ENCODE measurements at regions of chr19 and their contacts with region 1.

Region 1: DNA sequence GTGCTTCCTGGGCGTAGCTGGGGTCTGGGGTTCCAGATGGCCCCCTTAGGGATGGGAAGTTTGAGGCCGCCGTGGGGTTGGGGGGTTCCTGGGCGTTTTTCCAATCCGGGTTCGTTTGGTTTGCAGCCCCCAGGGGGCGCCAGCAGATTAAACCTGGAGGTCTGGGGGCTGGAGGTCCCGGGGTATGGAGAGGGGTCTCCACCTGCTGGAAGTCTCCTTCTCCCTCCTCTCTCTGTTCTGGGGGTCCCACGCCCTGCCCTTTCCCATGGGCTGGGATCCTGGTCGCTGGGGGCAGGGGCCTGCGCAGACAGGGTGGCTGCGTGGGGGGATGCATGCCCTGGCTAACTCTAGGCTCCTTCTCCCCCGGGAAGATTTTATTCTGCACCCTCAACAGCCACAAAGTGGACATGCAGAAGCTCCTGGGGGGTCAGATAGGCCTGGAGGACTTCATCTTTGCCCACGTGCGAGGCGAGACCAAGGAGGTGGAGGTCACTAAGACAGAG is 897 bp downstream of the GIPC3 start:
- DNase-seq: peak in 6 of 9 donors; percentile 26 to 59 (median 45)
- ATAC-seq: peak; percentile 51
- H3K4me3 ChIP-seq: peak overlapping the region; percentile 54
- H3K4me3 Mint-ChIP-seq: peak overlapping the region in 8 of 10 donors; percentile 27 to 74 (median 68)
- H3K27ac ChIP-seq: peak overlapping the region; percentile 31
- H3K27ac Mint-ChIP-seq: no peak overlapping the region
- H3K4me1 ChIP-seq: peaks cover 0 to 6% of the 10 kb centered on the region in 2 donors
- H3K4me1 Mint-ChIP-seq: no peaks in the 10 kb centered on the region
- H3K27me3 ChIP-seq: no peaks in the 10 kb centered on the region
- H3K27me3 Mint-ChIP-seq: peaks cover 0 to 6% (median 0%) of the 10 kb centered on the region in 5 donors

Region 2: DNA sequence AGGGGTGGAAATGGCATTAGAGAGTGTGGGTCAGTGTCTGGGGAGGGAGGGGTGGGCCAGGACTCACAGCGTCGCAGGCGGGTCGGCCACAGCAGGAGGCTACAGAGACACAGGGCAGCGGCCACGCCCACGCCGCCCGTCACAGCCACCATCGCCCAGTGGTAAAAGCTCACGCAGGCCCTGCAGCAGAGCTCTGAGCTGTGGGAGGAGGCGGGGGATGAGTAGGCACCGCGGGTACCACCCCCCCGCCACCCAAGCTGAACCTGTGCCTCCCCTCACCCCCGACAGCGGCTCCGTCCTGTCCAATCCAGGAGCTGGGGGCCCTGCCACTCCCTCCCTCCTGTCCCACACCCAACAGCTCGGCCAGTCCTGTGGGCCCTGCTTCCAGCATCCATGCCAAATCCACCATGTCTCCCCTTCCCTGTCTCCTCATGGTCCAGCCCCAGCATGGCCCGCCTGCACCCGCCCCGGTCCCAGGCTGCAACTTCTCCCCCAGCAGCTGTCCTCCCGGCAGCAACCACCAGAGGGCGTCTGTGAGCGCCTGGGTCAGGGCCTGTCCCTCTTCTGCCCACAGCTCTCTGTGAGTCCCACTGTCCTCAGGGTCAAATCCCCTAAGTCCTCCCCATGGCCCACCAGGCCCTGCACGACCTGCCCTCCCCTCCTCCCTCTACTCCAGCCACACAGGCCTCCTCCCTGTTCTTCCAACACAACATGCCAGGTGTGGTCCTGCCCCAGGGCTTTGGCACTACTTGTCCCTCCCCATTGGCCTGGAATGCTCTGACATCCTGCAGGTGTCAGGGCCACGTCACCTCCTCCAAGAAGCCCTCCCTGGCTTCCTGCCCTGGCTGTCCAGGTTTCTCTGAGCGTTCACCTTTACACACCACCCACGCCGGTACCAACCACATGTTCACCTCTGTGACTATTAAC is 41.2 kb before region 1 on chr19:
- CTCF ChIA-PET with region 1: interaction called, 8 read pairs
- POLR2A ChIA-PET with region 1: no interaction called
- intact Hi-C with region 1: loop called in 1 of 2 experiments (anchors 2 kb)
- DNase-seq: peak; percentile 52 to 89 (median 70)
- ATAC-seq: peak; percentile 77
- H3K4me3 ChIP-seq: no peak overlapping the region
- H3K4me3 Mint-ChIP-seq: peak overlapping the region in 1 of 10 donors; percentile 7
- H3K27ac ChIP-seq: peak overlapping the region; percentile 19
- H3K27ac Mint-ChIP-seq: peak overlapping the region in 8 of 9 donors; percentile 46 to 81 (median 71)
- H3K4me1 ChIP-seq: no peaks in the 10 kb centered on the region
- H3K4me1 Mint-ChIP-seq: peaks cover 4 to 17% (median 11%) of the 10 kb centered on the region in 7 donors
- H3K27me3 ChIP-seq: no peaks in the 10 kb centered on the region
- H3K27me3 Mint-ChIP-seq: no peaks in the 10 kb centered on the region

Region 3: DNA sequence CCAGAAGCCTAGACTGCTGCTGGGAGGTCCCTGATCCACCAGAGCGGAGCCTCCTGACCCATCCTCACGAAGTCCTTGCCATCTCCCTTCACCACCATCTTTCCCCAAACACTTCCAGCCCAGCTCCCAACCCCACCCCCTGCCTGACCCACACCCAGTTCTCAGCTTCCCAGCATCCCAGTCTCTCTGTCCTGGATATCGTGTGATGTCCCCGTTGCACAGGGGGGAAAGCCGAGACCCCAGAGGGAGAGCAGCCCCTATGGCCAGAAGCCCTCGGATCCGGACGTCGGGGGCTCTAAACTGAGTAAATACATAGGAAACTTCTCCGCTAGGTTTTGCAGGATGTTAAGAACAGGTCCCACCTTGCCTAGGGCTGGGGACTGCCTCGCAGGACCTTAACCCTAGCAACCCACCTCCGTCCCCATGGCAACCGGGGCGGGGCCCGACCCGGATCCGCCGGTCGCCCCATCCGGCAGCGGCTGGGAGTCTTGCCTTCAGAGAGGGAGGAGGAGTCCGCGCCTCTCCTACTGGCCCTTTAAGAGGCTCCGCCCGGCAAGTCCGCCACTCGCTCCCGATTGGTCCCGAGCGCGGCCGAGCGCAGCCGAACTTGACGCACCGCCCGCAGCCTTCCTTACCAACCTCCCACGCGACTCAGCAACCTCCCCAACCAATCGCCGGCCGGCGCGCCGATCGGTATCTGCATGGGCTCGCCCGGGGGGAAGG is 13.9 kb before region 1 on chr19:
- CTCF ChIA-PET with region 1: interaction called, 3 read pairs
- POLR2A ChIA-PET with region 1: interaction called, 9 read pairs
- intact Hi-C with region 1: loop called in 1 of 2 experiments (anchors 1 kb)
- DNase-seq: peak; percentile 94 to 99 (median 98)
- ATAC-seq: peak; percentile 96
- H3K4me3 ChIP-seq: peak overlapping the region; percentile 75
- H3K4me3 Mint-ChIP-seq: peak overlapping the region; percentile 72 to 91 (median 82)
- H3K27ac ChIP-seq: peak overlapping the region; percentile 62
- H3K27ac Mint-ChIP-seq: peak overlapping the region in 8 of 9 donors; percentile 30 to 84 (median 61)
- H3K4me1 ChIP-seq: peaks cover 12 to 13% of the 10 kb centered on the region in 2 donors
- H3K4me1 Mint-ChIP-seq: peaks cover 11 to 29% (median 14%) of the 10 kb centered on the region in 7 donors
- H3K27me3 ChIP-seq: no peaks in the 10 kb centered on the region
- H3K27me3 Mint-ChIP-seq: no peaks in the 10 kb centered on the region

Region 4: GRCh38 chr19:3606690-3607289 is 20.6 kb after region 1 on chr19 and contains the start of gene TBXA2R:
- CTCF ChIA-PET with region 1: interaction called, 5 read pairs
- POLR2A ChIA-PET with region 1: interaction called, 4 read pairs
- intact Hi-C with region 1: loop called in 1 of 2 experiments (anchors 2 kb)
- DNase-seq: peak in 6 of 9 donors; percentile 33 to 68 (median 46)
- ATAC-seq: peak; percentile 58
- H3K4me3 ChIP-seq: peak within 1 kb of the TSS; percentile 44
- H3K4me3 Mint-ChIP-seq: peak within 1 kb of the TSS in 8 of 10 donors; percentile 45 to 69 (median 58)
- H3K27ac ChIP-seq: peak within 1 kb of the TSS; percentile 65
- H3K27ac Mint-ChIP-seq: peak within 1 kb of the TSS in 5 of 9 donors; percentile 41 to 70 (median 53)
- H3K4me1 ChIP-seq: peaks cover 19 to 22% of the 10 kb centered on the region in 2 donors
- H3K4me1 Mint-ChIP-seq: peaks cover 7 to 15% (median 11%) of the 10 kb centered on the region in 7 donors
- H3K27me3 ChIP-seq: no peaks in the 10 kb centered on the region
- H3K27me3 Mint-ChIP-seq: peaks cover 0 to 9% (median 0%) of the 10 kb centered on the region in 5 donors
- total RNA-seq, gene TBXA2R: 0.73 to 5.9 (median 4.1) TPM

Region 5: GRCh38 chr19:3618144-3618810 is 32.1 kb after region 1 on chr19:
- CTCF ChIA-PET with region 1: interaction called, 4 read pairs
- POLR2A ChIA-PET with region 1: interaction called, 4 read pairs
- intact Hi-C with region 1: loop called in 1 of 2 experiments (anchors 1 kb)
- DNase-seq: peak in 7 of 9 donors; percentile 38 to 71 (median 45)
- ATAC-seq: peak; percentile 82
- H3K4me3 ChIP-seq: no peak overlapping the region
- H3K4me3 Mint-ChIP-seq: peak overlapping the region in 1 of 10 donors; percentile 76
- H3K27ac ChIP-seq: no peak overlapping the region
- H3K27ac Mint-ChIP-seq: no peak overlapping the region
- H3K4me1 ChIP-seq: peaks cover 0 to 13% of the 10 kb centered on the region in 2 donors
- H3K4me1 Mint-ChIP-seq: peaks cover 0 to 22% (median 15%) of the 10 kb centered on the region in 7 donors
- H3K27me3 ChIP-seq: no peaks in the 10 kb centered on the region
- H3K27me3 Mint-ChIP-seq: no peaks in the 10 kb centered on the region

Region 6: DNA sequence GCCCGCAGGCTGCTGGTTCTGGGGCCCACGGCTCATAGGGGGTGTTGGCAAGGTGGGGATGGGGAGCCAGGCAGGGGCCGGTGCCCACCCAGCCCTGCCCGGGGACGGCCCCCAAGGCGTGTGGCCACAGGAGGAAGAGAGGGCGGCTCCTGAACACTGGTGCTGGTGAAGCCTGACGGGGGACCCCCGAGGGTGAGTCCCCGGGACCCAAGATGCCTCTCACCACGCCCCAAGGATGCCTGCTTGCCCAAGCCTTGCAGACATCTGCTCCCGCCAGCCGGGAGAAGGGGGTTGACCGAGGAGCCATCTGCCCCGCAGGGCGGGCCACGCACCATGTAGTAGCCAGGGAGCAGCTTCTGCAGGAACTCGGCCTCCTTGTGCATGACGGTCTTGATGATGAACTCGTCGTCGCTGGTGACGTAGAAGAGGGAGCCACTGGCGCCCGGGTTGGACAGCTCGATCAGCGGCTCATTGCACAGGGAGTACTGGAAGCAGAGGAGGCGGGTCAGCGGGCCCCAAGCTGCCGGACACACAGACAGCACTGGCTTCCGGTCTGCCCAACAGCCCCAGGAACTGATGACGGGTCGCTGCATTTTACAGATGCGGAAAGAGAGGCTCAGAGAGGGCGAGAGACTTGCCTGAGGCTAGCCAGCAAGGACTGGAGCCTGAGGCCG is 70.0 kb after region 1 on chr19:
- CTCF ChIA-PET with region 1: no interaction called
- POLR2A ChIA-PET with region 1: no interaction called
- intact Hi-C with region 1: no loop called
- DNase-seq: no peak
- ATAC-seq: no peak
- H3K4me3 ChIP-seq: no peak overlapping the region
- H3K4me3 Mint-ChIP-seq: no peak overlapping the region
- H3K27ac ChIP-seq: no peak overlapping the region
- H3K27ac Mint-ChIP-seq: no peak overlapping the region
- H3K4me1 ChIP-seq: no peaks in the 10 kb centered on the region
- H3K4me1 Mint-ChIP-seq: no peaks in the 10 kb centered on the region
- H3K27me3 ChIP-seq: no peaks in the 10 kb centered on the region
- H3K27me3 Mint-ChIP-seq: no peaks in the 10 kb centered on the region

Region 7: DNA sequence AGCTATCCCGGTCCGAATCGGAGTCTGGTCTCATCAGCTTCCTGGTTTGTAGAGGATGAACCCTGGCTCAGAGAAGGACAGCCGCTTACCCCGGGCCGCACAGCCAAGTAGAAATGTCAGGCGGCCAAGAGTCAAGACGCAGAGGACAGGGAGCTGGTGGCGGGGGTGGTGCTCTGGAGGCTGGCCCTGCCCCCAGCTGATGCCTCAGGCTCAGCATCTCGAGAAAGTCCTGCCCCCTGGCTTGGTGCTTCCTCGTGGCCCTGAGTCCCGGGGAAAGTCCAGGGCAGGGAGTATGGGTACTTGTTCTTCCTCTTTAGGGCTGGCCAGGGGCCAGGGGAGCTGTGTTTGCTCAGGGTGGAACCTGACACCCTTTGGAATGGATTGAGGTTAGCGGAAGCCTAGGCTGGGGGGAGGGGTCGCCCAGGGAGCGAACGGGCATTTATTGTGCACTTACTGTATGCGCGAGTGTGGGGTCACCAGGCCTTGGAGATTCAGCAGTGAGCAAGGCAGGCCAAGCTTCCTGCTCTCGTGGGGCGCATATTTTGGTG is 124.2 kb after region 1 on chr19:
- CTCF ChIA-PET with region 1: no interaction called
- POLR2A ChIA-PET with region 1: no interaction called
- intact Hi-C with region 1: loop called in 1 of 2 experiments (anchors 1 kb)
- DNase-seq: no peak
- ATAC-seq: peak; percentile 83
- H3K4me3 ChIP-seq: no peak overlapping the region
- H3K4me3 Mint-ChIP-seq: no peak overlapping the region
- H3K27ac ChIP-seq: no peak overlapping the region
- H3K27ac Mint-ChIP-seq: no peak overlapping the region
- H3K4me1 ChIP-seq: no peaks in the 10 kb centered on the region
- H3K4me1 Mint-ChIP-seq: peaks cover 0 to 12% (median 5%) of the 10 kb centered on the region in 7 donors
- H3K27me3 ChIP-seq: no peaks in the 10 kb centered on the region
- H3K27me3 Mint-ChIP-seq: peaks cover 0 to 11% (median 0%) of the 10 kb centered on the region in 5 donors

Measured in naive thymus-derived CD4-positive, alpha-beta T cell (primary cell).